ENCODE measurements at regions of chr7 and their contacts with region 1.

Region 1: GRCh38 chr7:75531359-75531821 is 39.3 kb downstream of the SPDYE5 start:
- DNase-seq: no peak
- H3K4me3 ChIP-seq: no peak overlapping the region
- H3K27ac ChIP-seq: no peak overlapping the region
- H3K4me1 ChIP-seq: peaks cover 0 to 18% (median 11%) of the 10 kb centered on the region in 4 donors
- H3K27me3 ChIP-seq: no peaks in the 10 kb centered on the region
- CTCF ChIP-seq: no peak
- EP300 ChIP-seq: no peak
- POLR2A ChIP-seq: no peak

Region 2: DNA sequence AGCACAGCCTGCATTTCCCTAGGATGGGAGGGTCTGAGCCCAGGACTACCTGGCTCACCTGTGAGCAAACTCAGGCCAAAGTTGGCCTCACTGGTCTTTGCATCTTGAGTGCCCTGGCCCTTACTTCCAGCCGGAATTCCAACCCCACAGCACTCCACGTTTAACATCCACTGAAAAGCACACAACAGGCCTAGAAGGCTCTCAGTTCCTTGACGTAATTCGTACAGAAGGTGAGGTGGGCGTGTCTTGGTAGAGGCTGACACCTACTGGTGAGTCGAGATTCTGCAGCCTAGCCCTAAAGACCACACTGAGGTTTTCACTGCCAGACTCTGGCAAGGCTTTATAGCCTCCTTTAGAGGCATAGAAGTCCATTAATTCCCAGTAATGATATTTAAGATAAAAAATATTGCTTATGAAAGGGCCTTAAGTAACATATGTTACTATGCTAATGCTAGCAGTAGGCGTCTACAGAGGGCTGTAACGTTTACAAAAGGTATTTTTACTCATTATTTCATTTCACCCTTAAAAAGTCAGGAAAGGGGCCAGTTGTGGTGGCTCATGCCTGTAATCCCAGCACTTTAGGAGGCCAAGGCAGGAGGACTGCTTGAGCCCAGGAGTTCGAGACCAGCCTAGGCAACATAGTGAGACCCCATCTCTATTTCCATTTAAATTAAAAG is 111.6 kb after region 1 on chr7:
- intact Hi-C with region 1: loop called (anchors 5 kb)
- DNase-seq: no peak
- H3K4me3 ChIP-seq: no peak overlapping the region
- H3K27ac ChIP-seq: no peak overlapping the region
- H3K4me1 ChIP-seq: peaks cover 0 to 19% (median 16%) of the 10 kb centered on the region in 4 donors
- H3K27me3 ChIP-seq: no peaks in the 10 kb centered on the region
- CTCF ChIP-seq: peak in 3 of 4 experiments; percentile 34 to 72 (median 57)
- EP300 ChIP-seq: no peak
- POLR2A ChIP-seq: no peak

Region 3: DNA sequence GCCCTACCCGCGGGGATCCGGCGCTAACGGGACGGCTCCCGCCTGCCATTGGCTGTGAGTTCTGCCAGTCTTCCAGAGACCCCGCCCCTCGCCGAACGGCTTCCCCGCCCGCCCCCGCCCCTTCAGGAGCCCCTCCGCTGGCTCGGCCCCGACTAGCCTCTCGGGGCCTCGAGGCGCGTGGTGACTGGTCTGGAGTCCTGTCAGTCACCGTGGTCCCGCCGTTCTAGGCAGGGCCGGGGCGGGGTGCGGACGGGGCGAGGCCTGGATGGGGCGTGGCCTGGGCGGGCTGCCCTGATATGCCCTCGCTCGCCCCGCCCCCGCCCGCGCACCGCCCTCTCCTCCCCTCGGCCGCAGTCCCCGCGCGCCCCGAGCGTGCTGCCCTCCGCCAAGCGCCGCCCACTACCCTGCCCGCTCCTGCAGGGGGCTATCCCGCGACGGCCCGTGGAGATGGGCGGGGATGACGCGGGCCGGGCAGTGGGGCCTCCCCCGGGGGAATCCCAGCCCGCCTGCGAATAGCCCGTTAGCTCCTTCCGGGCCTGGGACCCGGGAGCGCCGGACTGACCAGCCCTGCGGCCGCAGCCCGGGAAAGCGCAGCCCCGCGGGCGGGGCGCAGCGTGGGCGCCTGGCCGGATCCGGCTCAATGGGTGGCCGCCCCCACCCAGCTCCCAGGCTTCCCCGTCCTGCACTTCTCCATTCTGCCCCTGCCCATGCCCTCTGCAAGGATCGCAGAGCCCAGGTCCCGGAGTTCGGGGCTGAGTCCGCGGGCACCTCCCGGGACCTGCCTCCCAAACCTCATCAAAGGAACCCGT is 207.8 kb after region 1 on chr7:
- intact Hi-C with region 1: loop called (anchors 5 kb)
- DNase-seq: peak; percentile 100
- H3K4me3 ChIP-seq: peak overlapping the region; percentile 78 to 99 (median 92)
- H3K27ac ChIP-seq: peak overlapping the region; percentile 90 to 94 (median 92)
- H3K4me1 ChIP-seq: peaks cover 0 to 21% (median 16%) of the 10 kb centered on the region in 4 donors
- H3K27me3 ChIP-seq: no peaks in the 10 kb centered on the region
- CTCF ChIP-seq: peak in 2 of 4 experiments; percentile 11 to 23
- EP300 ChIP-seq: no peak
- POLR2A ChIP-seq: peak in 1 of 2 donors; percentile 20

Region 4: GRCh38 chr7:75762314-75762917 is 231.0 kb after region 1 on chr7:
- intact Hi-C with region 1: loop called (anchors 5 kb)
- DNase-seq: no peak
- H3K4me3 ChIP-seq: no peak overlapping the region
- H3K27ac ChIP-seq: no peak overlapping the region
- H3K4me1 ChIP-seq: no peaks in the 10 kb centered on the region
- H3K27me3 ChIP-seq: no peaks in the 10 kb centered on the region
- CTCF ChIP-seq: peak; percentile 58 to 78 (median 67)
- EP300 ChIP-seq: no peak
- POLR2A ChIP-seq: no peak